ENCODE measurements at regions of chr3 and their contacts with region 1.

Region 1: GRCh38 chr3:60743631-60744164 is 507.6 kb downstream of the FHIT start:
- DNase-seq: peak; percentile 17

Region 2: GRCh38 chr3:60720736-60721135 is 23.0 kb before region 1 on chr3:
- CTCF ChIA-PET with region 1: no interaction called
- POLR2A ChIA-PET with region 1: no interaction called
- DNase-seq: no peak

Region 3: DNA sequence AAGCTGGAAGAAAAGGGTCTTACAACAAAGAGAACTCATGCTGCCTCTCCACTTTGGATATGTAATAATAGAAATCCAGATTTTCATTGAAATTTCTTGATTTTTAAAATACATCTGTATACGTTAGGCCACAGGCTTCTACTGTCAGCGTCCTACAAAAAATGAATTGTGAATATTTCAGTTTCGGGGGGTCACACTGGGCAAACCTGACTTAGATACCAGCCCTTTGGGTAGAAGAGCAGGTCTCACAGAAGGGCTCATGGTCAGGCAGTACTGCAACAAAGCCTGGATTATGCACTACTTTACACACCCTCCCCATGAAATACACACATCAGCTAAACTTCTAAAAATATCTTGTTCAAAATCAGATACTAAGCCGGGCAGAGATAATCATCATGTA is 213.0 kb after region 1 on chr3:
- CTCF ChIA-PET with region 1: interaction called, 10 read pairs
- POLR2A ChIA-PET with region 1: no interaction called
- DNase-seq: no peak